ENCODE measurements at regions of chr14 and their contacts with region 1.

Region 1: GRCh38 chr14:58598028-58598803 is 39.5 kb upstream of the DACT1 start:
- DNase-seq: peak; percentile 39
- H3K4me3 Mint-ChIP-seq: no peak overlapping the region
- H3K27ac Mint-ChIP-seq: no peak overlapping the region
- H3K4me1 Mint-ChIP-seq: peaks cover 43% of the 10 kb centered on the region
- H3K27me3 Mint-ChIP-seq: peaks cover 3% of the 10 kb centered on the region

Region 2: DNA sequence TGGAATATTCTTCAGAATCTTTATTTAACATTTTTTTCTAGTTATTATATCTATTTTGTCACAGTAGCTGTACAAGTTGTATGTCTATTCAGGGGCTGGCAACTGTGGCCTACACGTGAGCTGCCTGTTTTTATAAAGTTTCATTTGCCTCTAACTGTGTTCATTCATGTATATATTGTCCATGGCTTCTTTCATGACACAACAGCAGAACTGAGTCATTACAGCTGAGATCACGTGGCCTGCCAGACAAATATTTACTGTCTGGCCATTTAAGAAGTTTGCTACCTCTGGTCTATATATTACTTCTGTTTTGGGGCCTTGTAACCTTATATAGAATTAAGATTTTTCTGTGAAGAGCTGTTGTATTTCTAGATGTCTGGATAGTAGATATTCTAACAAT is 132.8 kb before region 1 on chr14:
- CTCF ChIA-PET with region 1: no interaction called
- intact Hi-C with region 1: no loop called
- DNase-seq: no peak
- H3K4me3 Mint-ChIP-seq: no peak overlapping the region
- H3K27ac Mint-ChIP-seq: no peak overlapping the region
- H3K4me1 Mint-ChIP-seq: no peaks in the 10 kb centered on the region
- H3K27me3 Mint-ChIP-seq: no peaks in the 10 kb centered on the region

Region 3: DNA sequence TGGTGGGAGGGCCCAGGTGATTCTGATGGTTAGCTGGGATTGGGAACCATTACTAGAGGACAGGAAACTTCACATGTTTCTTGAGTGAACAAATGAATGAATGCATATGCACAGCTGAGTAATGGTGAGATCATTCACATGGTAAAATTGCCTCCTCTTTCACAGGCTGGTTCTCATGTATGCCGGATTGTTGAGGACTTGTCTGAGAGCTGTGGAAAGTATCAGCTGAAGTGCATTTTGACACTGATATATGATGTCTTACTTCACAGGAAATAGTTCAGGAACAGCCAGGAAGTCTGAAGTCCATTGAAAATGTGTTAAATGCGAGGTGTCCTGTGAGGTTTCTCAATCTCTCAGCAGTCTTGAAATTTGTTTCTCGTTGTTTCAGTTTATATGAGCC is 38.0 kb before region 1 on chr14:
- CTCF ChIA-PET with region 1: no interaction called
- intact Hi-C with region 1: loop called (anchors 5 kb)
- DNase-seq: no peak
- H3K4me3 Mint-ChIP-seq: no peak overlapping the region
- H3K27ac Mint-ChIP-seq: peak overlapping the region; percentile 44
- H3K4me1 Mint-ChIP-seq: peaks cover 14% of the 10 kb centered on the region
- H3K27me3 Mint-ChIP-seq: no peaks in the 10 kb centered on the region

Region 4: GRCh38 chr14:58620011-58620410 is 21.8 kb after region 1 on chr14:
- CTCF ChIA-PET with region 1: no interaction called
- intact Hi-C with region 1: loop called (anchors 1 kb)
- DNase-seq: no peak
- H3K4me3 Mint-ChIP-seq: no peak overlapping the region
- H3K27ac Mint-ChIP-seq: no peak overlapping the region
- H3K4me1 Mint-ChIP-seq: peaks cover 9% of the 10 kb centered on the region
- H3K27me3 Mint-ChIP-seq: no peaks in the 10 kb centered on the region

Region 5: GRCh38 chr14:58645631-58646030 is 47.4 kb after region 1 on chr14:
- CTCF ChIA-PET with region 1: no interaction called
- intact Hi-C with region 1: no loop called
- DNase-seq: no peak
- H3K4me3 Mint-ChIP-seq: no peak overlapping the region
- H3K27ac Mint-ChIP-seq: no peak overlapping the region
- H3K4me1 Mint-ChIP-seq: peaks cover 11% of the 10 kb centered on the region
- H3K27me3 Mint-ChIP-seq: no peaks in the 10 kb centered on the region

Measured in activated naive CD4-positive, alpha-beta T cell treated with anti-CD3 and anti-CD28 coated beads for 36 hours (primary cell).